Vagina (tissue), 2 donors: ENCODE measurements at regions of chr13 and their contacts with region 1.

Region 1: DNA sequence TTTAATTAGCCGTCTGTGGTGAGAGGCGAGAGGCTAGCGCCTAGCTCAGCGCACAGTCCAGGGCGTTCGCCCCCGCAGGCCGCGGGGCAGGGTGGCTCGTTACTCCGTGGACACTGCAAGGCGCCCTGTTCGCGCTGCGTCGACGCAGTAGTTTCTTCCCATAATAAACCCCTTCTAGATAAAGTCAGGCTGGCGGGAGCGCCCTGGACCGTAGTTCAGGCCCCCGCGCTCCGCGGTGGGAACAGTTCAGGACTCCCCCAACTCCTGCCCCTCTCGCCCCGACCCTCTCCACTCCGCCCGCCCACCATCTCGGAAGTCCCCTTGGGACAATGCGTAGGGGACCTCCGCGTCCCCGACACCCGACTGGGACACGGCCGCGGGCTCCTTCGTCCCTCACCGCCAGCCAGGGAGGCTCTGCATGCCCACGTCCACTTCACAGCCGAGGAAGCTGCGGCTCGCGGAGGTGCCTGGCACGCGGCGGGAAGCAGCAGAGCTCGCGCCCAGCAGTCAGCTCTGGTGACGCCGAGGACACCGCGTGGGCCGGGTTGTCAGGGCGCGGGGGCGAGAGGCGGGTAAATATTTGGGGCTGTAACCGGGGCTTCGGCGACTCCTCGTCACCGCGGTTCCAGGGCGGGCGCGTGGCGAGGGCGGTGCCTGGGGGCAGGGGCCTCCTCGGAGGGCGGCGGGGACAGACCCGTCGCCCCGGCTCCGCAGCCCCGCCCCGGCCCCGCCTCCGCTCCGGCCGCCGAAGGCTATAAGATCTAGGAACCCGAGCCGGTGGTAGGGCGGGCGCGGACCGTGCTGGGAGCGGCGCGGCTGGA is at the start of gene RGCC:
- DNase-seq: no peak
- H3K4me3 ChIP-seq: peak within 1 kb of the TSS; percentile 71 to 88
- H3K27ac ChIP-seq: peak within 1 kb of the TSS; percentile 76
- H3K4me1 ChIP-seq: peaks cover 27% of the 10 kb centered on the region
- H3K27me3 ChIP-seq: no peaks in the 10 kb centered on the region
- CTCF ChIP-seq: no peak
- POLR2A ChIP-seq: peak in 1 of 2 donors; percentile 60
- total RNA-seq, gene RGCC: 212 TPM

Region 2: GRCh38 chr13:41652727-41653361 is 195.9 kb after region 1 on chr13:
- intact Hi-C with region 1: loop called (anchors 10 kb)
- DNase-seq: no peak
- H3K4me3 ChIP-seq: no peak overlapping the region
- H3K27ac ChIP-seq: no peak overlapping the region
- H3K4me1 ChIP-seq: peaks cover 11% of the 10 kb centered on the region
- H3K27me3 ChIP-seq: no peaks in the 10 kb centered on the region
- CTCF ChIP-seq: peak; percentile 35 to 79 (median 37)
- POLR2A ChIP-seq: no peak